Left colon (tissue), 2 donors: ENCODE measurements at regions of chr1 and their contacts with region 1.

Region 1: DNA sequence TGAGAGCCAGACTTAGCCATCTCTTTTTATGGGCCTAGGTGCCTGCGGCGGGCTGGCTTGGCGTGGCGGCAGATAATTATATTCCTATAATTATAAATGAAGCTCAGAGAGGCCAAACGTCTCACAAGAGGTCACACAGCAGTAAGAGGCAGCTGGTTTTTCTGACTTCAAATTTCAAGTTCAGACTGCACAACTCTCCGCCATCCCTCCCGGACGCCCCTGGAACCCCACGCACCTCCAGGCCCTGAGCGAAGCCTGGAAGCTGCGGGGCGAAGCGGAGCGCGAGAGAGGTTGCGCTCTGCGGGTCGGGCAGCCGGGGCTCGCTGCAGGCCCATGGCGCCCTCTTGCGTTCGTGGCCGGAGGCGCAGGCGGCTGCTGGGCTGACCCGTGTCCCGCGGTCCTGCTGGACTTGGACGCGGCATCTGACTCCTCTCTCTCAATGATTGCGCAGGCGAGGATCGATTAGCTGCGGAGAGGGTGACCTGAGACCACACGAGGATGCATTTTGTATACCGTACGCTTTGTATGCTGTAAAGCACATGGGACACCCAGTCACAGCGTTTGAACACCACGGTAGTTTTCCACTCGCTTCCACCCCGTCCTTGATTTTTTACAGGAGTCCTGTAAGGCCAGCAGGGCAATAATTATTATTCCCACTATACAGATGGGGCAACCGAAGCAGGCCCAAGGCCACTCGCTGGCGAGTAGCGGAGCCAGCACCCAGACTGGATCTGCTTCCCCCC is 272.7 kb downstream of the FOXD2 start:
- DNase-seq: peak; percentile 50 to 86
- ATAC-seq: peak; percentile 68

Region 2: DNA sequence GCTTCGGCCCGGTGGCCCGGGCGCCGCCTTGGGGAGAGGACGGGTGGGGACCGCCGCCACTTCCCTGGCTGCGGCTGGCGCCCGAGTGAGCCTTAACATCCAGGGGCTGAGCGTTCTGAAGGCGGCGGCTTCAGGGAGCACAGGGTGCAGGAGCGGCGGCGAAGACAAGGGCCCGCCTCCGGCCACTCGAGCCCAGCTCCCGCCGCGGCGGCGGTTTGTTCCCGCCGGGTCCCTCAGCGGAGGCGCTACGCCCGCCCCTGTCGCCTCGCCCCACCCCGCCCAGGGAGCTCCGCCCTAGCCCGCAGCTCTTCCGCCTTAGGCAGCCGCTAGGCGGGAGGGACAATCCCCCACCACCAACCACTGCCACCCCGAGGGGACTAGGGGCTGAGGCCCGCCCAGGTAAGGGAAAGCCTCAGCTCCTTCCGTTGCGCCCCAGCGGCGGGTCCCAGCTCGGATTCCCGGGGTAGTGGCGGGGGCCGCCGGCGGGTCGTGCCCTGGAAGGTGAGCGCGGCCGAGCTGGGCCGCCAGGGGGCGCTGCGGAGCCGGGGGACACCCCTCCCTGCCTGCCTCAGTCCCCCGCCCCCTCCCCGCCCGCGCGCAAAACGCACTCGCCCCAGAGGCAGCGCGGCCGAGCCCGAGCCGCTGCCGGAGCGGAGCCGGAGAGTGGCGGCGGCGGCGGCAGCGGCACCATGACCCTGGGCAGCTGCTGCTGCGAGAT is 272.9 kb before region 1 on chr1 and contains the start of gene FOXD2:
- intact Hi-C with region 1: loop called (anchors 5 kb)
- DNase-seq: peak; percentile 91 to 94
- ATAC-seq: peak; percentile 69
- total RNA-seq, gene FOXD2: 16.1 to 20.7 TPM

Region 3: DNA sequence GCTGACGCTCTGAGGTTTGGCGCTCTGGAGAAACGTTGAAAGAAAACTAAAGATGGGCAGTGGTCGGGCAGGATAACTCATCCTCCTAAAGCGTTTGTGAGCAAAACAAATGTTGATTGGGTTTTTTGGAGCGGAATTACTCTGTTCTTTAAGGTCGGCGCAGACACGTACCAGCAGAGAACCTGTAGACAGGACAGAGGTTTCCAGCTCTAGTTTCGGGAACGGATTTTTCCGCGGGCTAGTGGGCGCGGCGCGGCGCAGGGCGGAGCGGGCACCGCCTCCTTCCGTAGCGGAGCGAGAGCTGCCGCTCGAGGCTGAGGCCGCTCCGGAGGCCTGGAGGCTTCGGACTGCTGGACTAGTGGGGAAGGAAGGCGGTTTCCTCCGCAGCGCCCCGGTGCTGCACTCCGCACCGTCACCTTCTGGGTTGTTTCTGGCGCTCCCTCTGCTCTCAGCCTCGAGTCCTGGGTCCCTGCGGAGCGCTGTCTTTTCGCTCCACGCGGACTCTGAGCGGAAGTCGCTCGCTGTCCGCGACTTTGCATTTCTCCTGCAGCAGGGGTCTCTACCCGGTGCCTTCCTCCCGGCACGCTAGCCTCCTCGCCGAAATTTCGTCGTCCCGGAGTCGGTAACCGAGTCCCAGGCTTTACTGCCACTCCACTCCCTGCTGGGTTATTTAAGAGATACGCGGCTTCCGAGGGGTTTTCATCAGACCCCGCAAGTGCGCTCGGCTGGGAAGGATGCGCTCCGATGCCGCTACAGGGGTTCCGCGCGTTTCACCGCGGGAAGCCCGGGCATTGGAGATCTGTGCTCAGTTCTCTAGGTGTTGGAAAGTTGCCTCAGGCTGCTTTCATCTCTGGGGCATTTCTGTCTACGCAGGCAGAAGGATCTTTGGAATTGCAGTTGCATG is 265.7 kb before region 1 on chr1:
- intact Hi-C with region 1: loop called in 1 of 2 experiments (anchors 5 kb)
- DNase-seq: peak in 1 of 2 donors; percentile 72
- ATAC-seq: peak; percentile 56